ENCODE measurements at regions of chr13 and their contacts with region 1.

Region 1: GRCh38 chr13:36818804-36819738 is at the start of gene RFXAP:
- DNase-seq: peak; percentile 98
- H3K4me3 Mint-ChIP-seq: peak within 1 kb of the TSS; percentile 96
- H3K27ac Mint-ChIP-seq: peak within 1 kb of the TSS; percentile 97
- H3K4me1 Mint-ChIP-seq: peaks cover 45% of the 10 kb centered on the region
- H3K27me3 Mint-ChIP-seq: peaks cover 16% of the 10 kb centered on the region
- total RNA-seq, gene RFXAP: 18.0 and 20.9 TPM in 2 replicates

Region 2: DNA sequence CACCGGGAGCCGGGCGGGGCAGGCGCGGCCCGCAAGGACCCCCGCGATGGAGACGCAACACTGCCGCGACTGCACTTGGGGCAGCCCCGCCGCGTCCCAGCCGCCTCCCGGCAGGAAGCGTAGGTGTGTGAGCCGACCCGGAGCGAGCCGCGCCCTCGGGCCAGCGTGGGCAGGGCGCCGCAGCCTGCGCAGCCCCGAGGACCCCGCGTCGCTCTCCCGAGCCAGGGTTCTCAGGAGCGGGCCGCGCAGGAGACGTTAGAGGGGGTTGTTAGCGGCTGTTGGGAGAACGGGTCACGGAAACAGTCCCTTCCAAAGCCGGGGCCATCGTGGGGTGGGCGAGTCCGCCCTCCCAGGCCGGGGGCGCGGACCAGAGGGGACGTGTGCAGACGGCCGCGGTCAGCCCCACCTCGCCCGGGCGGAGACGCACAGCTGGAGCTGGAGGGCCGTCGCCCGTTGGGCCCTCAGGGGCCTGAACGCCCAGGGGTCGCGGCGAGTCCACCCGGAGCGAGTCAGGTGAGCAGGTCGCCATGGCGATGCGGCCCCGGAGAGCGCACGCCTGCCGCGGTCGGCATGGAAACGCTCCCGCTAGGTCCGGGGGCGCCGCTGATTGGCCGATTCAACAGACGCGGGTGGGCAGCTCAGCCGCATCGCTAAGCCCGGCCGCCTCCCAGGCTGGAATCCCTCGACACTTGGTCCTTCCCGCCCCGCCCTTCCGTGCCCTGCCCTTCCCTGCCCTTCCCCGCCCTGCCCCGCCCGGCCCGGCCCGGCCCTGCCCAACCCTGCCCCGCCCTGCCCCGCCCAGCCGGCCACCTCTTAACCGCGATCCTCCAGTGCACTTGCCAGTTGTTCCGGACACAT is 387.2 kb before region 1 on chr13 and contains the start of gene CCNA1:
- intact Hi-C with region 1: loop called (anchors 2 kb)
- DNase-seq: peak; percentile 79
- H3K4me3 Mint-ChIP-seq: peak within 1 kb of the TSS; percentile 77
- H3K27ac Mint-ChIP-seq: no peak within 1 kb of the TSS
- H3K4me1 Mint-ChIP-seq: peaks cover 16% of the 10 kb centered on the region
- H3K27me3 Mint-ChIP-seq: peaks cover 47% of the 10 kb centered on the region
- total RNA-seq, gene CCNA1: 2.1 and 2.2 TPM in 2 replicates

Region 3: DNA sequence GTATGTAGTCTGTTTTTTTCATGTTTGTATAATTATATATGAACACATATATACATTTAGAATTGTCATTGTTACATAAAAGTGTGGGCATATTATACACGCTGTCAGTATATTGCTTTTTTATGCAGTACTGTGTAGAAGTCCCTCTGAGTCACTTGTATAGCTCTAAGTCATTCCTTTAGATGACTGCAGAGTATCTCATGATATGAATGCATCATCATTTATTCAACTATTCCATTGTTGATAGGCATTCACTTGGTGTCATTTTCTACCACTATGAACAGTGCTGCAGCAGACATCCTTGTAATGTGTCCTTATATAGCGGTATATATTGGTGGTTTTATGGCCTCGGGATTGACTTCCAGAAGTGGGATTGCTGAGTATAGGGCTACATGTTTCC is 15.2 kb after region 1 on chr13:
- intact Hi-C with region 1: loop called (anchors 2 kb)
- DNase-seq: no peak
- H3K4me3 Mint-ChIP-seq: no peak overlapping the region
- H3K27ac Mint-ChIP-seq: no peak overlapping the region
- H3K4me1 Mint-ChIP-seq: peaks cover 5% of the 10 kb centered on the region
- H3K27me3 Mint-ChIP-seq: no peaks in the 10 kb centered on the region

Region 4: GRCh38 chr13:36858290-36858689 is 39.2 kb after region 1 on chr13:
- intact Hi-C with region 1: loop called (anchors 5 kb)
- DNase-seq: peak; percentile 65
- H3K4me3 Mint-ChIP-seq: no peak overlapping the region
- H3K27ac Mint-ChIP-seq: no peak overlapping the region
- H3K4me1 Mint-ChIP-seq: peaks cover 16% of the 10 kb centered on the region
- H3K27me3 Mint-ChIP-seq: peaks cover 8% of the 10 kb centered on the region

Region 5: DNA sequence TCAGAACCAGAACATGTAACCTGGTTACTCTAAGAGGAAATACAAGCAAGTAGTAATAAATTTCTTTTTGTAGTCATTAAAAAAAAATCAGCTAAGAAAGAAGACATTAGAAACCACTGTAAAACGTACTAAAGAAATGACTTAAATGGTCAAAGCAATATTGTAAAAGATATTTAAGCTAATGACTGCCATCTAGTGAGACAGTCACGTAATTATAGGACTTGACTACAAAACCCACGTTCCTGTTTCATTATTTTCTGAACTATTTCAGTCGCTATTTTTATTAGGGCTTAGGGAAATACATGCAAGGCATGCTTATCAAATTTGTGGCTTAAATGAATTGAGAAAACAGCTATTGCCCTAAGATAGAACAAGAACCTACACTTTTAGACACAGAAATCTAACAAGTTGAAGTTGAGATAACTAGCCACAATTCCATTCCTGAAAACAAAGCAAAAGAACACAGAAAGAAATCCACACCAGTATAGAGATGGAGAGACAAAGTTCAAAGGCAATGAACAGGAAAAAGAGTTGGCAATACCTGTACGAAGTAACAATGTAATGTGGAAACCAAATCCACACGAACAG is 162.2 kb after region 1 on chr13:
- intact Hi-C with region 1: no loop called
- DNase-seq: peak; percentile 35
- H3K4me3 Mint-ChIP-seq: no peak overlapping the region
- H3K27ac Mint-ChIP-seq: no peak overlapping the region
- H3K4me1 Mint-ChIP-seq: peaks cover 4% of the 10 kb centered on the region
- H3K27me3 Mint-ChIP-seq: no peaks in the 10 kb centered on the region

Region 6: DNA sequence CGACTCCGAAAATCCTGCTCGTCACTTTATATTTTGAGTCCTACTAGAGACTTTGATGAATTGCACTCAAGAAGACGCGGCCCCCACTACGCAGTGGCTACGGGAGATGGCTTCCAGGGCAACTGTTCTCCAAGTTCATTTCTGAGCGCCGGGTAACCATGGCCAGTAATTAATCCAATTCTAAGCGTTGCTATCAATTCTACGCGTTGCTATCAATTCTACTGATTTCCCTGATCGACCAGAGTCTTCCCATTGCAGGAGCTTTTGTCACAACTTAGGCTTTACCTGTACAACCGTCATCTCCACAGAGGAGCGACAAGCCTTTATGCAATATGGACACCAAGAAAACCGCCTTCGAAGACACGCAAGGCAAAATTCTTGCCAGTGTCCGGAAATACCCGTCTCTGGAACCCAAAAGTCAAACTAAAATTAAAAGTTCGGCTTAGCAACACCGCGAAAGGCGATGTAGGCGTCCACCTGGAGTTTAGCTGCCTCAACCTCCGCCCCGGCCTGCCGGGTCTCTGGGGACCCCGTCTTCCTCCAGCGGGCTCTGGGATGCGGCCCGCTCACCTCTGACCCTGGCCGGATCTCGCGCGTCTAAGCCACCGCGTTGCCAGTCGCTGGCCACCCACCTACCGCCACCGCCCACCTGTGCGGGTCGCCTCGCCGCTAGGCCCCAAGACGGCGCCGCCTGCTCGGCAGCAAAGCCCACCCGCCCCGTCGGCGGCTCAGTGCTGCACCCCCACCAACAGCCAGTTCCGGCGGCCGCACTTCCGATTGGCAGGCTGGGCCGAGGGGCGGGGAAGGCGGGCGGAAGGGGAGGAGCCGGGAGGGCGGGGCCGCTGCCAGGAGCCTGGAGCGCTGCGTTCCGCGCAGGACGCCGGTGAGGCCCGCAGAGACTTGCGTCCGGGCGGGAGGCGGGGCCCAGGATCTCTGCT is 240.1 kb after region 1 on chr13 and contains the start of gene SUPT20H:
- intact Hi-C with region 1: loop called (anchors 2 kb)
- DNase-seq: peak; percentile 97
- H3K4me3 Mint-ChIP-seq: peak within 1 kb of the TSS; percentile 87
- H3K27ac Mint-ChIP-seq: peak within 1 kb of the TSS; percentile 97
- H3K4me1 Mint-ChIP-seq: peaks cover 20% of the 10 kb centered on the region
- H3K27me3 Mint-ChIP-seq: peaks cover 9% of the 10 kb centered on the region
- total RNA-seq, gene SUPT20H: 67.4 and 74.8 TPM in 2 replicates

Region 7: DNA sequence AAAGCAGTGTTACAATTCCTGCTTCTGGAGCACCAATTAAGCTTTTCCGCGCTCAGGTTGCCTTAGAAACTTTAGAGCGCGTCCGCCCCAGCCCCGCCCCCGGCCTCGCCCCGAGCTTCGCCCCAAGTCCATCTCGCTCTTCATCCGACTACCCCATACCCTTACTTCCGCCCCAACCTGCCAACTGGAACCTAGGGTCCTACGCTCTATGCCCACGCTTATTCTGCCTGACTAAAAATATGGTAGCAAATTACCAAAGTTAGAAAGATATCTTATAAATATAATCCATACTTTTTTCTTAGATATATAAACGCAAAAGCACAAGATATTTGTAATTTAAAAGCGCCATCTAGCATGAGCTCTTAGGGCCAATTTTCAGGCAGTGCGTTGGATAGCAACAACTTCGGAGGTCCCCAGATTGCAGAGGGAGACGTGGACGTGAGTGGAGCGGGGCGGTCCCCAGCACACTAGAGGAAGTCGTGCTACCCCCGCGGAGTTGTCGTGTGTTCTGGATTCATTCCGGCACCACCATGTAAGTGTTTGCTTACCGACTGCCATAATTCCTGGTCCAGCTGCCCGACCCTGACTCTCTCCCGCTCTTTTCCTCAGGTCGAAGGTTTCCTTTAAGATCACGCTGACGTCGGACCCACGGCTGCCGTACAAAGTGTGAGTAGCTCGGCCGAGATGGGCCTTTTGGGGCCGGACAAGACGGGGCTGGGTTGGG is 1530.5 kb after region 1 on chr13 and contains the start of gene UFM1:
- intact Hi-C with region 1: loop called (anchors 10 kb)
- DNase-seq: peak; percentile 95
- H3K4me3 Mint-ChIP-seq: peak within 1 kb of the TSS; percentile 99
- H3K27ac Mint-ChIP-seq: peak within 1 kb of the TSS; percentile 99
- H3K4me1 Mint-ChIP-seq: peaks cover 34% of the 10 kb centered on the region
- H3K27me3 Mint-ChIP-seq: no peaks in the 10 kb centered on the region
- total RNA-seq, gene UFM1: 63.5 and 69.4 TPM in 2 replicates